ENCODE measurements at regions of chr10 and their contacts with region 1.

Region 1: DNA sequence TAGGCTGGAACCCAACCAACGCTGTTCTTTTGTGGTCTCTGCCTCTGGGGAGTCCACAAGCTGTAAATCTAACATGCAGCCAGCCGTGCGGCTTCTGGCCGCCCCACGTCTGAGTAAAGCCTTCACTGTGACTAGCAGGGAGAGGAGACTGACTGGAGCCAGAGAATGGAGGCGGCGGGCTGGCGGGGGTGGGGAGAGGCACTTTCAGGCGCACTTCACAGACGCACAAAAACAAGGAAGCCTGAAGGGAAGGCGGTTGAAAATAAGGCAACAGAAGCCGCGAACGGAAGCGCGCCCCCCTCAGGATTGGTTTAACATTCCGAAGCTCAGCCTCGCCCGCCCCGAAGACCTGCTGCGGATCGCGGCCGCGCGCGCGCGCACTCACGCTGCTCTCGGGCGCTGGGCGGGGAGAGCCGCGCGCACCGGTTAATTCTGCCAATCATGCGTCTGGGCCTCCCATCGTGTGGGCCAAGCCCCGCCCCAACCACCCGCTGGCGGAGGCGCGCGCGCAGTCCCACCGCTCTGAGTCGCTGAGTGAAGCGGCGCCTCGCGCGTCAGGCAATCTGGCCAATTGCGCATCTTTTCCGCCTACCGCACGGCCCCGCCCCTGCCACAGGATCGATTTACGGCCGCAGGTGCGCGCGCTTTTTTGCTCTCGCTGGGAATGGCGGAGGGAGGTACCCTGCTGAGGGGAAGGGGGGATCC is at the start of gene SFR1:
- DNase-seq: peak; percentile 95 to 100 (median 99)
- ATAC-seq: peak; percentile 93
- H3K4me3 ChIP-seq: peak within 1 kb of the TSS; percentile 88
- H3K4me3 Mint-ChIP-seq: peak within 1 kb of the TSS; percentile 88 to 97 (median 96)
- H3K27ac ChIP-seq: peak within 1 kb of the TSS; percentile 99
- H3K27ac Mint-ChIP-seq: peak within 1 kb of the TSS; percentile 95 to 100 (median 99)
- H3K4me1 ChIP-seq: peaks cover 13 to 18% of the 10 kb centered on the region in 2 donors
- H3K4me1 Mint-ChIP-seq: peaks cover 9 to 42% (median 32%) of the 10 kb centered on the region in 7 donors
- H3K27me3 ChIP-seq: no peaks in the 10 kb centered on the region
- H3K27me3 Mint-ChIP-seq: peaks cover 0 to 12% (median 0%) of the 10 kb centered on the region in 5 donors
- total RNA-seq, gene SFR1: 12.0 to 15.3 (median 14.2) TPM

Region 2: DNA sequence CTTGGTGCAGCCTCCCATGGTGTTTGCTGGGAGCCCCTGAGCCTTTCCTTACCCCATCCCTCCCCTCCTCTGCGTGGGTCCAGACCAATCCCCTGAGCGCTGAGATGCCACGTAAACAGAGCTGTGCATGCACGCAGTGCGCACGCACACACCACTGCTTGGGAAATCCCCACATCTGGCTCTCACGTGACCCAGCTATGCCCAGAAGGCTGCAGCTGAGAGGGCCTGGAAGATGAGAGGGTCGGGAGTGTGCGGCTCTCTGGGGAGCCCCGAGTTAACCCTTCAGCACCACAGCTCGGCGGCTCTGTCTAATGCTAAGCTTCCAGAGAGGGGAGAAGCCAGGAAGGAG is 443.5 kb before region 1 on chr10:
- CTCF ChIA-PET with region 1: no interaction called
- POLR2A ChIA-PET with region 1: no interaction called
- intact Hi-C with region 1: loop called in 1 of 2 experiments (anchors 1 kb)
- DNase-seq: peak; percentile 67 to 97 (median 87)
- ATAC-seq: peak; percentile 98
- H3K4me3 ChIP-seq: peak overlapping the region; percentile 57
- H3K4me3 Mint-ChIP-seq: peak overlapping the region; percentile 76 to 92 (median 86)
- H3K27ac ChIP-seq: peak overlapping the region; percentile 87
- H3K27ac Mint-ChIP-seq: peak overlapping the region; percentile 83 to 99 (median 95)
- H3K4me1 ChIP-seq: peaks cover 18% of the 10 kb centered on the region in 2 donors
- H3K4me1 Mint-ChIP-seq: peaks cover 3 to 24% (median 17%) of the 10 kb centered on the region in 7 donors
- H3K27me3 ChIP-seq: no peaks in the 10 kb centered on the region
- H3K27me3 Mint-ChIP-seq: no peaks in the 10 kb centered on the region

Region 3: DNA sequence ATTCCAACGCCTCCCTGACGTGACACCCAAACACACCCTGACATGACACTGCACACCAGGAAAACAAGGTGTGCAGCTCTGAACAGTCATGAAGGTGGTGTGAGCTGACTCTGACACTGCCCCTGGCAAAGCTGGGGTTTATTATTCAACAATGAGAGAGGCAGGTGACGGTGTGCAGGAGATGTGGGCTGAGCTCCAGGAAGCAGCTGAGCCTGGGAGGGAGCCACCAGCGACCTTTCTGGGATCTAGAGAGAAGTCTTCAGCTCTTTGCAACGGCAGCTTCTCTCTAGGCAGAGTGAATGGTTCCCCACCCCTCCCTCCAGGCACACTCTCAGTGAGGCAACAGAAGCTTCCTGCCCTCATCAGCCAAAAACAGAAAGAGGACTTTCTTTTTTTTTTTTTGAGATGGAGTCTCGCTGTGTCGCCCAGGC is 331.9 kb before region 1 on chr10:
- CTCF ChIA-PET with region 1: no interaction called
- POLR2A ChIA-PET with region 1: no interaction called
- intact Hi-C with region 1: no loop called
- DNase-seq: peak in 6 of 9 donors; percentile 8 to 44 (median 40)
- ATAC-seq: peak; percentile 60
- H3K4me3 ChIP-seq: no peak overlapping the region
- H3K4me3 Mint-ChIP-seq: peak overlapping the region in 7 of 10 donors; percentile 0 to 61 (median 20)
- H3K27ac ChIP-seq: no peak overlapping the region
- H3K27ac Mint-ChIP-seq: peak overlapping the region in 7 of 9 donors; percentile 19 to 81 (median 68)
- H3K4me1 ChIP-seq: peaks cover 0 to 7% of the 10 kb centered on the region in 2 donors
- H3K4me1 Mint-ChIP-seq: peaks cover 0 to 14% (median 11%) of the 10 kb centered on the region in 7 donors
- H3K27me3 ChIP-seq: no peaks in the 10 kb centered on the region
- H3K27me3 Mint-ChIP-seq: peaks cover 0 to 15% (median 0%) of the 10 kb centered on the region in 5 donors

Region 4: DNA sequence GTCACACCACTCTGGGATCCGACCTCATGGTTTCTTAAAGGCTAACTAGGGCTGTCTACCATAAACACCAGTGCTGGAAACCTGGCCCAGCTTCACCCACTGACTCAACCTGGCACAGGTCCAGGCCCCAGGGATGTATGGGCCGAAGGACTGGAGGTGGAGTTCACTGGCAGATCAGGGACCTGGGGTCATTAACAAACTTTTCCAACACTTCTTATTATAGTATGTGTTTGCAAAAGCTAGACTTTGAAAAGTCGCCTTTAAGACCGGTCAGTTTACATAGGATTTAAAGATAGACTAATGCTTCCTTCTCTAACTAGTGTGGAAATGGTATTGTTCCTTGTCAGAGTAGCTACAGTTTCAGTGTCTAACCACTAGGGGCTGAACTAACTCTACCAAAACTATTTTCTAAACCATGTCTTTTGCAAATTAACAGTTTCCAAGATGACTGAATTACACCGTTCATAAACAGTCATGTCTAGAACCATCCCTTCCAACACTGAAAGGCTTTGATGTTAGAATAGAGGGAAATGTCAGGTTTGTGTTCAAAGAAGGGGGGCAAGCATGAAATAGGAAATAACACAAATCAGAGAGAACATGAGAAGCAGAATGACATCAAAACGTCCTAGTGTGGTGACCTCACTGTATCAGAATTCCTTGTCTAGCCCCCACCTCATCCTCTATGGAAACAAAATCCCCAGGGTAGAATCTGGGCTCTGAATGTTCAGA is 233.4 kb before region 1 on chr10:
- CTCF ChIA-PET with region 1: interaction called, 15 read pairs
- POLR2A ChIA-PET with region 1: interaction called, 11 read pairs
- intact Hi-C with region 1: loop called (anchors 1 kb)
- DNase-seq: peak in 7 of 9 donors; percentile 36 to 72 (median 59)
- ATAC-seq: peak; percentile 90
- H3K4me3 ChIP-seq: no peak overlapping the region
- H3K4me3 Mint-ChIP-seq: no peak overlapping the region
- H3K27ac ChIP-seq: no peak overlapping the region
- H3K27ac Mint-ChIP-seq: peak overlapping the region in 8 of 9 donors; percentile 5 to 83 (median 38)
- H3K4me1 ChIP-seq: peaks cover 4 to 5% of the 10 kb centered on the region in 2 donors
- H3K4me1 Mint-ChIP-seq: peaks cover 6 to 33% (median 20%) of the 10 kb centered on the region in 7 donors
- H3K27me3 ChIP-seq: no peaks in the 10 kb centered on the region
- H3K27me3 Mint-ChIP-seq: no peaks in the 10 kb centered on the region

Region 5: GRCh38 chr10:103918053-103918846 is 203.4 kb before region 1 on chr10 and contains the start of gene STN1:
- CTCF ChIA-PET with region 1: interaction called, 3 read pairs
- POLR2A ChIA-PET with region 1: interaction called, 15 read pairs
- intact Hi-C with region 1: loop called (anchors 1 kb)
- DNase-seq: peak; percentile 81 to 95 (median 94)
- ATAC-seq: peak; percentile 97
- H3K4me3 ChIP-seq: peak within 1 kb of the TSS; percentile 89
- H3K4me3 Mint-ChIP-seq: peak within 1 kb of the TSS; percentile 88 to 99 (median 97)
- H3K27ac ChIP-seq: peak within 1 kb of the TSS; percentile 79
- H3K27ac Mint-ChIP-seq: peak within 1 kb of the TSS; percentile 95 to 99 (median 97)
- H3K4me1 ChIP-seq: peaks cover 28 to 31% of the 10 kb centered on the region in 2 donors
- H3K4me1 Mint-ChIP-seq: peaks cover 15 to 44% (median 38%) of the 10 kb centered on the region in 7 donors
- H3K27me3 ChIP-seq: no peaks in the 10 kb centered on the region
- H3K27me3 Mint-ChIP-seq: no peaks in the 10 kb centered on the region
- total RNA-seq, gene STN1: 28.8 to 42.6 (median 34.8) TPM

Region 6: DNA sequence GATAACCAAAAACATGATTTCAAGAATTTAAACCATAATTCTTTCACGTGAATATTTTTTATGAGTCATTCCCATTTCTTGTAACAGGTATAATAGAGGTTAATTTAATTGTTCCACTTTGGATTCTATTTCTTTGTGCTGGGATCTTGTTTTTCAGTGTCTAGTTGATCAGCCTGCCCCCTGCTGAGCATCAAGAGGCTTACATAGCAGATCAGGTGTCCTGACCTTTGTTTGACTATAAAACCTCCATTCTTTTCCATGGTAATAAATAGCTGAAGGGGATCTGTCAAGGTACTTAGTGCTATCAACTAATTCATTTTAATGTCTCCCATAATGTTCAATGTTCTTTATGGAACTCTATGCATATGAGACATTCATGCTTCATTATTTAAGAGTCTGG is 40.9 kb before region 1 on chr10:
- CTCF ChIA-PET with region 1: interaction called, 3 read pairs
- POLR2A ChIA-PET with region 1: interaction called, 4 read pairs
- intact Hi-C with region 1: loop called in 1 of 2 experiments (anchors 5 kb)
- DNase-seq: peak in 5 of 9 donors; percentile 8 to 20 (median 12)
- ATAC-seq: peak; percentile 42
- H3K4me3 ChIP-seq: no peak overlapping the region
- H3K4me3 Mint-ChIP-seq: no peak overlapping the region
- H3K27ac ChIP-seq: no peak overlapping the region
- H3K27ac Mint-ChIP-seq: no peak overlapping the region
- H3K4me1 ChIP-seq: no peaks in the 10 kb centered on the region
- H3K4me1 Mint-ChIP-seq: peaks cover 0 to 4% (median 0%) of the 10 kb centered on the region in 7 donors
- H3K27me3 ChIP-seq: no peaks in the 10 kb centered on the region
- H3K27me3 Mint-ChIP-seq: peaks cover 0 to 22% (median 0%) of the 10 kb centered on the region in 5 donors

Region 7: GRCh38 chr10:104268716-104269645 is 147.3 kb after region 1 on chr10 and contains the start of gene GSTO2:
- CTCF ChIA-PET with region 1: no interaction called
- POLR2A ChIA-PET with region 1: interaction called, 3 read pairs
- intact Hi-C with region 1: loop called (anchors 1 kb)
- DNase-seq: peak; percentile 87 to 99 (median 98)
- ATAC-seq: peak; percentile 97
- H3K4me3 ChIP-seq: peak within 1 kb of the TSS; percentile 77
- H3K4me3 Mint-ChIP-seq: peak within 1 kb of the TSS; percentile 87 to 98 (median 94)
- H3K27ac ChIP-seq: peak within 1 kb of the TSS; percentile 93
- H3K27ac Mint-ChIP-seq: peak within 1 kb of the TSS; percentile 85 to 98 (median 96)
- H3K4me1 ChIP-seq: peaks cover 23 to 25% of the 10 kb centered on the region in 2 donors
- H3K4me1 Mint-ChIP-seq: peaks cover 25 to 55% (median 49%) of the 10 kb centered on the region in 7 donors
- H3K27me3 ChIP-seq: no peaks in the 10 kb centered on the region
- H3K27me3 Mint-ChIP-seq: no peaks in the 10 kb centered on the region
- total RNA-seq, gene GSTO2: 1.1 to 2.5 (median 1.4) TPM

Region 8: DNA sequence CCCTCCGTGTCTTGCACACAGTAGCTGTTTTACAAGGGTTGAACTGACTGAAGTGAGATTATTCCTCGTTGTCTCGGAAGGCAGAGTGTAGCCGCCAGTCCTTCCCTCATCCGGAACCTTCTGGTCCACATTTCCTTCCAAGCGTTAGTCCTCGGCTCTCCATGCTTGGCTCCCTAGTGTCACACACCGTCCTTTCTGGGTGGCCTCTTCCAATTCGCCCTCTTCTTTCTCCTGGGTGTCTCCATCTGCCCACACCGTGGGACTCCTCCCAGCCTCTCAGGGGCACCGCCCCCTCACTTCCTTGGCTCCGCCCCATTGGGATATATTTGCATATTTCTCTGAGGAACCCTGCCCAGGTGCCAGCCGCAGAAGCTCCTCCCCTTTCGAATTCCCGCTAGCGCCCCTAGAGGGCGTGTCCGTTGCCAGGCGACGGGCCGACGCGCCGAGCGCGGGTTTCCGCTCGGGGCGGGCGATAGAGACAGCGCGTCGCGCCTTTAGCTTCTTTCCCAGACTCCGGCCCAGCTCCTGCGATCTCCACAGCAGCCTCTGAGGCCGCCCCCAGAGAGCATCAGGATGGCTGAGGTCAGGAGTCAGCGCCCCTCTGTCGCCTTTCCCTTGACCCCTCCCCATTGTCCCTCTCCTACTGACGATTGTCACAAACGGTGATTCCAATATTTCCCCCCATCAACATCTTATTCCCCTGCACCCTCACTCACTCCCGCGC is 231.8 kb after region 1 on chr10 and contains the start of gene CFAP58:
- CTCF ChIA-PET with region 1: no interaction called
- POLR2A ChIA-PET with region 1: no interaction called
- intact Hi-C with region 1: loop called (anchors 2 to 5 kb)
- DNase-seq: peak; percentile 82 to 90 (median 87)
- ATAC-seq: peak; percentile 88
- H3K4me3 ChIP-seq: peak within 1 kb of the TSS; percentile 54
- H3K4me3 Mint-ChIP-seq: peak within 1 kb of the TSS in 6 of 10 donors; percentile 4 to 67 (median 10)
- H3K27ac ChIP-seq: no peak within 1 kb of the TSS
- H3K27ac Mint-ChIP-seq: peak within 1 kb of the TSS in 2 of 9 donors; percentile 14 to 61
- H3K4me1 ChIP-seq: peaks cover 11% of the 10 kb centered on the region in 2 donors
- H3K4me1 Mint-ChIP-seq: peaks cover 0 to 20% (median 6%) of the 10 kb centered on the region in 7 donors
- H3K27me3 ChIP-seq: no peaks in the 10 kb centered on the region
- H3K27me3 Mint-ChIP-seq: no peaks in the 10 kb centered on the region
- total RNA-seq, gene CFAP58: 0.17 TPM in 1 of 5 experiments, not detected in the others

Measured in naive thymus-derived CD4-positive, alpha-beta T cell (primary cell).